Motor neuron (in vitro differentiated cells): ENCODE measurements at regions of chr11 and their contacts with region 1.

Region 1: GRCh38 chr11:5369793-5370192 is 13.8 kb upstream of the OR51M1 start:
- ATAC-seq: peak in 4 of 8 experiments; percentile 38 to 74 (median 56)
- H3K4me3 ChIP-seq: no peak overlapping the region
- H3K27ac ChIP-seq: no peak overlapping the region
- H3K4me1 ChIP-seq: no peaks in the 10 kb centered on the region

Region 2: DNA sequence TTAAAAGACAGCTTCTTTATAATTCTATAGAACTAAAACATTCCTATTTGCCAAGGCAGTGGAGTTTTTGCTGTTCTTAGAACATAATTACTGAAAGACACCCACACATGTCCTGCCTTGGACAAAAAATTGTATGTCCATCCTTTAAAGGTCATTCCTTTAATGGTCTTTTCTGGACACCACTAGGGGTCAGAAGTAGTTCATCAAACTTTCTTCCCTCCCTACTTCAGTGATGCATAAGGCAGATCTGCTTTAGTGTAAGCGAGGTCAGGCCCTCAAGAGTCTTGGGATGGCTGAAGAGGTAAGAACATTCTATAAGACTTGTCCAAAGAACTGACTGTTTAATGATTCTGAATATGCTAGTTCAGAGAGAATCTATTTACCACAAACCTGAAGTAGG is 165.0 kb before region 1 on chr11:
- in situ Hi-C with region 1: loop called in 1 of 9 experiments (anchors 25 kb)
- ATAC-seq: peak in 6 of 8 experiments; percentile 38 to 96 (median 70)
- H3K4me3 ChIP-seq: no peak overlapping the region
- H3K27ac ChIP-seq: no peak overlapping the region
- H3K4me1 ChIP-seq: no peaks in the 10 kb centered on the region